CD4-positive, alpha-beta T cell (primary cell): ENCODE measurements at regions of chr3 and their contacts with region 1.

Region 1: GRCh38 chr3:106191211-106191610 is 322.4 kb upstream of the CBLB start:
- DNase-seq: no peak
- ATAC-seq: no peak
- H3K4me3 ChIP-seq: no peak overlapping the region
- H3K4me3 Mint-ChIP-seq: no peak overlapping the region
- H3K27ac ChIP-seq: no peak overlapping the region
- H3K27ac Mint-ChIP-seq: no peak overlapping the region
- H3K4me1 ChIP-seq: no peaks in the 10 kb centered on the region
- H3K4me1 Mint-ChIP-seq: peaks cover 5% of the 10 kb centered on the region
- H3K27me3 ChIP-seq: no peaks in the 10 kb centered on the region
- H3K27me3 Mint-ChIP-seq: no peaks in the 10 kb centered on the region
- CTCF ChIP-seq: no peak

Region 2: GRCh38 chr3:106176734-106177133 is 14.5 kb before region 1 on chr3:
- CTCF ChIA-PET with region 1: no interaction called
- POLR2A ChIA-PET with region 1: no interaction called
- intact Hi-C with region 1: loop called in 1 of 2 experiments (anchors 2 kb)
- DNase-seq: peak in 13 of 14 experiments; percentile 4 to 84 (median 45)
- ATAC-seq: peak; percentile 92
- H3K4me3 ChIP-seq: peak overlapping the region; percentile 40
- H3K4me3 Mint-ChIP-seq: peak overlapping the region; percentile 78
- H3K27ac ChIP-seq: peak overlapping the region in 1 of 2 donors; percentile 72
- H3K27ac Mint-ChIP-seq: peak overlapping the region; percentile 79
- H3K4me1 ChIP-seq: peaks cover 19% of the 10 kb centered on the region
- H3K4me1 Mint-ChIP-seq: peaks cover 53% of the 10 kb centered on the region
- H3K27me3 ChIP-seq: no peaks in the 10 kb centered on the region
- H3K27me3 Mint-ChIP-seq: no peaks in the 10 kb centered on the region
- CTCF ChIP-seq: no peak

Region 3: DNA sequence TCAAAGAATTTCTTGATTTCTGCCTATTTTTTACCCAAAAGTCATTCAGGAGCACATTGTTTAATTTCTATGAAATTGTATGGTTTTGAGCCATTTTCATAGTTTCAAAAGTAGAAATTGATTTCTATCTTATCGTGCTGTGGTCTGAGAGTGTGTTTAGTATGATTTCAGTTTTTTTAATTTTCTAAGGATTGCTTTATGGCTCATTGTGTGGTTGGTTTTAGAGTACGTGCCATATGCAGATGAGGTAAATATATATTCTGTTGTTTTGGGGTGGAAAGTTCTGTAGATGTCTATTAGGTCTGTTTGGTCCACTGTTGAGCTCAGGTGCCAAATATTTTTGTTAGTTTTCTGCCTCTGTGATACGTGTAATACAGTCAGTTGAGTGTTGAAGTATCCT is 164.7 kb after region 1 on chr3:
- CTCF ChIA-PET with region 1: no interaction called
- POLR2A ChIA-PET with region 1: no interaction called
- intact Hi-C with region 1: no loop called
- DNase-seq: no peak
- ATAC-seq: no peak
- H3K4me3 ChIP-seq: no peak overlapping the region
- H3K4me3 Mint-ChIP-seq: no peak overlapping the region
- H3K27ac ChIP-seq: no peak overlapping the region
- H3K27ac Mint-ChIP-seq: no peak overlapping the region
- H3K4me1 ChIP-seq: no peaks in the 10 kb centered on the region
- H3K4me1 Mint-ChIP-seq: no peaks in the 10 kb centered on the region
- H3K27me3 ChIP-seq: no peaks in the 10 kb centered on the region
- H3K27me3 Mint-ChIP-seq: no peaks in the 10 kb centered on the region
- CTCF ChIP-seq: no peak

Region 4: DNA sequence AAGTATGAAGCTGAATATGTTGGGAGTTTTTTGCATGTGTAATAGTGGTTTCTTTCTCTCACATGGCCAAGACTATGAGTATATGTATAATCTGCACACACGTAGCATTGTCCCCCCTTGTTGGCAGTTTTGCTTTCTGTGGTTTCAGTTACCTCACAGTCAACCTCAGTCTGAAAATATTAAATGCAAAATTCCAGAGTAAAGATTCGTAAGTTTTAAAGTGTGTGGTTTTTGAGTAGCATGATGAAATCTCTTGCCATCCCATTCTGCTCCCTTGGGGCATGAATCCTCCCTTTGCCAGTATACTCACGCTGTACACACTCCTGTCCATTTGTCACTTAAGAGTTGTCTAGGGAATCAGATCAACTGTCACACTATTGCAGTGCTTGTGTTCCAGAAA is 444.1 kb after region 1 on chr3:
- CTCF ChIA-PET with region 1: no interaction called
- POLR2A ChIA-PET with region 1: no interaction called
- intact Hi-C with region 1: no loop called
- DNase-seq: no peak
- ATAC-seq: no peak
- H3K4me3 ChIP-seq: no peak overlapping the region
- H3K4me3 Mint-ChIP-seq: no peak overlapping the region
- H3K27ac ChIP-seq: no peak overlapping the region
- H3K27ac Mint-ChIP-seq: no peak overlapping the region
- H3K4me1 ChIP-seq: no peaks in the 10 kb centered on the region
- H3K4me1 Mint-ChIP-seq: no peaks in the 10 kb centered on the region
- H3K27me3 ChIP-seq: no peaks in the 10 kb centered on the region
- H3K27me3 Mint-ChIP-seq: no peaks in the 10 kb centered on the region
- CTCF ChIP-seq: no peak

Region 5: GRCh38 chr3:106824856-106825255 is 633.6 kb after region 1 on chr3:
- CTCF ChIA-PET with region 1: no interaction called
- POLR2A ChIA-PET with region 1: no interaction called
- intact Hi-C with region 1: no loop called
- DNase-seq: peak in 1 of 14 experiments; percentile 1
- ATAC-seq: no peak
- H3K4me3 ChIP-seq: no peak overlapping the region
- H3K4me3 Mint-ChIP-seq: no peak overlapping the region
- H3K27ac ChIP-seq: no peak overlapping the region
- H3K27ac Mint-ChIP-seq: no peak overlapping the region
- H3K4me1 ChIP-seq: no peaks in the 10 kb centered on the region
- H3K4me1 Mint-ChIP-seq: no peaks in the 10 kb centered on the region
- H3K27me3 ChIP-seq: no peaks in the 10 kb centered on the region
- H3K27me3 Mint-ChIP-seq: no peaks in the 10 kb centered on the region
- CTCF ChIP-seq: no peak